Activated CD8-positive, alpha-beta T cell treated with anti-CD3 and anti-CD28 coated beads, Interleukin-2, amount 10 ng/mL, durations not matched to agents 7 days and 5 days (primary cell): ENCODE measurements at regions of chr5 and their contacts with region 1.

Region 1: GRCh38 chr5:159156426-159157238 is 52.7 kb downstream of the RNF145 start:
- DNase-seq: peak; percentile 62
- ATAC-seq: peak; percentile 80
- H3K4me3 Mint-ChIP-seq: no peak overlapping the region
- H3K27ac Mint-ChIP-seq: peak overlapping the region; percentile 48
- H3K4me1 Mint-ChIP-seq: peaks cover 27% of the 10 kb centered on the region
- H3K27me3 Mint-ChIP-seq: peaks cover under 1% of the 10 kb centered on the region

Region 2: GRCh38 chr5:159175547-159175946 is 18.9 kb after region 1 on chr5:
- CTCF ChIA-PET with region 1: interaction called, 74 read pairs
- POLR2A ChIA-PET with region 1: no interaction called
- DNase-seq: no peak
- ATAC-seq: peak; percentile 81
- H3K4me3 Mint-ChIP-seq: no peak overlapping the region
- H3K27ac Mint-ChIP-seq: peak overlapping the region; percentile 77
- H3K4me1 Mint-ChIP-seq: peaks cover 34% of the 10 kb centered on the region
- H3K27me3 Mint-ChIP-seq: no peaks in the 10 kb centered on the region

Region 3: GRCh38 chr5:159244163-159244562 is 87.5 kb after region 1 on chr5:
- CTCF ChIA-PET with region 1: interaction called, 13 read pairs
- POLR2A ChIA-PET with region 1: no interaction called
- DNase-seq: no peak
- ATAC-seq: no peak
- H3K4me3 Mint-ChIP-seq: no peak overlapping the region
- H3K27ac Mint-ChIP-seq: no peak overlapping the region
- H3K4me1 Mint-ChIP-seq: peaks cover 10% of the 10 kb centered on the region
- H3K27me3 Mint-ChIP-seq: peaks cover 9% of the 10 kb centered on the region

Region 4: GRCh38 chr5:159286420-159287035 is 129.9 kb after region 1 on chr5:
- CTCF ChIA-PET with region 1: interaction called, 11 read pairs
- POLR2A ChIA-PET with region 1: no interaction called
- DNase-seq: peak; percentile 30
- ATAC-seq: peak; percentile 49
- H3K4me3 Mint-ChIP-seq: no peak overlapping the region
- H3K27ac Mint-ChIP-seq: no peak overlapping the region
- H3K4me1 Mint-ChIP-seq: peaks cover 3% of the 10 kb centered on the region
- H3K27me3 Mint-ChIP-seq: no peaks in the 10 kb centered on the region

Region 5: GRCh38 chr5:159316519-159317383 is 160.1 kb after region 1 on chr5:
- CTCF ChIA-PET with region 1: interaction called, 83 read pairs
- POLR2A ChIA-PET with region 1: no interaction called
- DNase-seq: peak; percentile 69
- ATAC-seq: peak; percentile 74
- H3K4me3 Mint-ChIP-seq: no peak overlapping the region
- H3K27ac Mint-ChIP-seq: no peak overlapping the region
- H3K4me1 Mint-ChIP-seq: no peaks in the 10 kb centered on the region
- H3K27me3 Mint-ChIP-seq: peaks cover 20% of the 10 kb centered on the region

Region 6: GRCh38 chr5:159987031-159987674 is 830.5 kb after region 1 on chr5:
- CTCF ChIA-PET with region 1: interaction called, 13 read pairs
- POLR2A ChIA-PET with region 1: no interaction called
- DNase-seq: peak; percentile 80
- ATAC-seq: peak; percentile 98
- H3K4me3 Mint-ChIP-seq: peak overlapping the region; percentile 49
- H3K27ac Mint-ChIP-seq: no peak overlapping the region
- H3K4me1 Mint-ChIP-seq: peaks cover 5% of the 10 kb centered on the region
- H3K27me3 Mint-ChIP-seq: peaks cover 46% of the 10 kb centered on the region